MCF 10A (cell line): ENCODE measurements at regions of chr20 and their contacts with region 1.

Region 1: GRCh38 chr20:45322952-45323383 is 14.9 kb upstream of the MATN4 start:
- DNase-seq: peak; percentile 77
- H3K4me3 Mint-ChIP-seq: no peak overlapping the region
- H3K27ac Mint-ChIP-seq: peak overlapping the region; percentile 59
- H3K4me1 Mint-ChIP-seq: peaks cover 6% of the 10 kb centered on the region
- H3K27me3 Mint-ChIP-seq: no peaks in the 10 kb centered on the region
- CTCF ChIP-seq: peak; percentile 8

Region 2: GRCh38 chr20:45300961-45301360 is 22.0 kb before region 1 on chr20:
- CTCF ChIA-PET with region 1: interaction called, 31 read pairs
- POLR2A ChIA-PET with region 1: no interaction called
- intact Hi-C with region 1: no loop called
- DNase-seq: peak; percentile 42
- H3K4me3 Mint-ChIP-seq: no peak overlapping the region
- H3K27ac Mint-ChIP-seq: no peak overlapping the region
- H3K4me1 Mint-ChIP-seq: no peaks in the 10 kb centered on the region
- H3K27me3 Mint-ChIP-seq: no peaks in the 10 kb centered on the region
- CTCF ChIP-seq: no peak

Region 3: GRCh38 chr20:45337367-45338120 is 14.6 kb after region 1 on chr20:
- CTCF ChIA-PET with region 1: interaction called, 44 read pairs
- POLR2A ChIA-PET with region 1: interaction called, 46 read pairs
- intact Hi-C with region 1: no loop called
- DNase-seq: peak; percentile 66
- H3K4me3 Mint-ChIP-seq: peak overlapping the region; percentile 45
- H3K27ac Mint-ChIP-seq: peak overlapping the region; percentile 97
- H3K4me1 Mint-ChIP-seq: peaks cover 58% of the 10 kb centered on the region
- H3K27me3 Mint-ChIP-seq: no peaks in the 10 kb centered on the region
- CTCF ChIP-seq: no peak

Region 4: DNA sequence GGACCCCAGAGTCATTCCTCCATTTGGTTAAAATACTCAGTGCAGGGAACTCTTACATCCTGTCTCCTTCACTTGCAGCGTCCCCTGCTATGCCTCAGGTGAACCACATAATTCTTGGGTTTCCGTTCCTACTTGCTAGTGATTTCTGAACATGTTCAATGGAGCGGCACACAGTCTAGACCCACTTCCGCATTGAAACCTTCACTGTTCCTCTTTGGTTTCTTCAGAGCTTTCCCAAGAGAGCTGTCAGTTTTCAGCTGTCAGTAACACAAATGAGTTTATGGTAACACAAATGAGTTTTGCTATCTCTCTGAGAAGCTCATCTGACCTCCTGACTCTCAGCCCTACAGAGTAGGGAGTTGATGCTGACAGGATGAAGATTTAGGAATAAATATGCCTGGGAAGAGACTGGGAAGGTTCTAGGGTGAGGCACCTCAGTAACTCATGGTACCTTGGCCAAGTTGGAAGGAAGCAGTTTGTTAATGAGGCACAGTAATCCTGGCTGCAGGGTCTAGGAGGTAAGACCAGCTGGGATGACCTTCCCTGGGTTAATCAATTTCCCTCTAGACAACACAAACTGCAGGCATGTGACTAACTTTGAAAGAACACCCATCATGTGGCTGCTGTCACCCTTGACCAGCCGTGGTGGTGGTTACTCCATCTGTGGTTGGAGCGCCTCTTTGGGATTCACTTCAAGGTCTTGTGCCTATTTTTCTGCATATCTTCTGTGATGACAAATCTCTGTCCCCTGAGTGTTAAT is 45.4 kb after region 1 on chr20:
- CTCF ChIA-PET with region 1: interaction called, 28 read pairs
- POLR2A ChIA-PET with region 1: interaction called, 1,328 read pairs
- intact Hi-C with region 1: loop called (anchors 2 kb)
- DNase-seq: no peak
- H3K4me3 Mint-ChIP-seq: no peak overlapping the region
- H3K27ac Mint-ChIP-seq: no peak overlapping the region
- H3K4me1 Mint-ChIP-seq: no peaks in the 10 kb centered on the region
- H3K27me3 Mint-ChIP-seq: no peaks in the 10 kb centered on the region
- CTCF ChIP-seq: no peak

Region 5: GRCh38 chr20:45427236-45428149 is 104.5 kb after region 1 on chr20:
- CTCF ChIA-PET with region 1: interaction called, 17 read pairs
- POLR2A ChIA-PET with region 1: no interaction called
- intact Hi-C with region 1: no loop called
- DNase-seq: no peak
- H3K4me3 Mint-ChIP-seq: no peak overlapping the region
- H3K27ac Mint-ChIP-seq: no peak overlapping the region
- H3K4me1 Mint-ChIP-seq: no peaks in the 10 kb centered on the region
- H3K27me3 Mint-ChIP-seq: no peaks in the 10 kb centered on the region
- CTCF ChIP-seq: no peak

Region 6: GRCh38 chr20:45518282-45518681 is 195.3 kb after region 1 on chr20:
- CTCF ChIA-PET with region 1: interaction called, 10 read pairs
- POLR2A ChIA-PET with region 1: interaction called, 3 read pairs
- intact Hi-C with region 1: no loop called
- DNase-seq: peak; percentile 91
- H3K4me3 Mint-ChIP-seq: peak overlapping the region; percentile 21
- H3K27ac Mint-ChIP-seq: peak overlapping the region; percentile 80
- H3K4me1 Mint-ChIP-seq: peaks cover 28% of the 10 kb centered on the region
- H3K27me3 Mint-ChIP-seq: no peaks in the 10 kb centered on the region
- CTCF ChIP-seq: no peak

Region 7: DNA sequence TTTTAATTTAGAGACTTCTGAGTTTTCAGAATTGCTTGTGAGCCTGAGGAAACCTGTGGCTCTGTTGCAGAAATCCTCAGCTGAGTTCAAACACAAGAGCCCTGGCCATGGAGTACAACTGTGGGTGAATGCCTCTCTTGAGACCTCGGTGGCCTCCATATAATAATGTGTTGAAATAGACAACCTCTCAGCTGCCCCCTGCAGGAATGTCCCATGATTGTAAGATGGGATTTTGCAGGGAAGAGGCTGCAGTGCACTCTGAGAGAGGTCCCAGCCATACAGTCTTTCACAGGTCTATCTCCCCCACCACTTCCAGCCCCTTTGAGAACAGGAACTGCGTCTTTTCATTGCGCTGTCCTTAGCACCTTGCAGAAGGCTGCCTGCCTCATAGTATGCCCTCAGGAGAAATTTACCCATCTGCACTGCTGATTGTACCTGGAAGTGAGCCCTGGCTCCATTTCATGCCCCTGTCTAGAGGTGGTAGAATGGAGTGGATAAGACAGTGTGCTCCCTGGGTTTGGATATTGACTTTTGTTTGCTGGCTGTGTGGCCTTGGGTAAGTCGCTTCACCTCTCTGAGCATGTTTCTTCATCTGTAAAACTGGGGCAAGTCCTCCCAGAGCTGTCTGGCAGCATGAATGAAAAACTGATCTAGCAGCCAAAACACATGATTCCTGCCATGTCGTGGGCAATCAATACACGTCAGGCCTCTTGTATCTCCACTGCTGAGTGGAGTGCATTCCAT is 1002.2 kb after region 1 on chr20:
- CTCF ChIA-PET with region 1: no interaction called
- POLR2A ChIA-PET with region 1: no interaction called
- intact Hi-C with region 1: no loop called
- DNase-seq: peak; percentile 52
- H3K4me3 Mint-ChIP-seq: no peak overlapping the region
- H3K27ac Mint-ChIP-seq: no peak overlapping the region
- H3K4me1 Mint-ChIP-seq: peaks cover 5% of the 10 kb centered on the region
- H3K27me3 Mint-ChIP-seq: peaks cover 45% of the 10 kb centered on the region
- CTCF ChIP-seq: peak; percentile 37